Calu3 (cell line): ENCODE measurements at regions of chr9 and their contacts with region 1.

Region 1: GRCh38 chr9:113275157-113276131 is at the starts of genes CDC26 and PRPF4:
- DNase-seq: peak; percentile 93
- H3K4me3 Mint-ChIP-seq: no peak within 1 kb of the TSS
- H3K27ac Mint-ChIP-seq: no peak within 1 kb of the TSS
- H3K4me1 Mint-ChIP-seq: no peaks in the 10 kb centered on the region
- H3K27me3 Mint-ChIP-seq: no peaks in the 10 kb centered on the region
- CTCF ChIP-seq: no peak
- total RNA-seq, gene CDC26: 20.5 and 21.3 TPM in 2 replicates
- total RNA-seq, gene PRPF4: 23.7 TPM in 2 replicates

Region 2: GRCh38 chr9:112050544-112051475 is 1224.6 kb before region 1 on chr9:
- CTCF ChIA-PET with region 1: interaction called, 11 read pairs
- intact Hi-C with region 1: no loop called
- DNase-seq: no peak
- H3K4me3 Mint-ChIP-seq: no peak overlapping the region
- H3K27ac Mint-ChIP-seq: no peak overlapping the region
- H3K4me1 Mint-ChIP-seq: peaks cover 25% of the 10 kb centered on the region
- H3K27me3 Mint-ChIP-seq: no peaks in the 10 kb centered on the region
- CTCF ChIP-seq: no peak

Region 3: GRCh38 chr9:113164536-113165300 is 110.7 kb before region 1 on chr9:
- CTCF ChIA-PET with region 1: no interaction called
- intact Hi-C with region 1: no loop called
- DNase-seq: no peak
- H3K4me3 Mint-ChIP-seq: no peak overlapping the region
- H3K27ac Mint-ChIP-seq: no peak overlapping the region
- H3K4me1 Mint-ChIP-seq: no peaks in the 10 kb centered on the region
- H3K27me3 Mint-ChIP-seq: no peaks in the 10 kb centered on the region
- CTCF ChIP-seq: no peak

Region 4: DNA sequence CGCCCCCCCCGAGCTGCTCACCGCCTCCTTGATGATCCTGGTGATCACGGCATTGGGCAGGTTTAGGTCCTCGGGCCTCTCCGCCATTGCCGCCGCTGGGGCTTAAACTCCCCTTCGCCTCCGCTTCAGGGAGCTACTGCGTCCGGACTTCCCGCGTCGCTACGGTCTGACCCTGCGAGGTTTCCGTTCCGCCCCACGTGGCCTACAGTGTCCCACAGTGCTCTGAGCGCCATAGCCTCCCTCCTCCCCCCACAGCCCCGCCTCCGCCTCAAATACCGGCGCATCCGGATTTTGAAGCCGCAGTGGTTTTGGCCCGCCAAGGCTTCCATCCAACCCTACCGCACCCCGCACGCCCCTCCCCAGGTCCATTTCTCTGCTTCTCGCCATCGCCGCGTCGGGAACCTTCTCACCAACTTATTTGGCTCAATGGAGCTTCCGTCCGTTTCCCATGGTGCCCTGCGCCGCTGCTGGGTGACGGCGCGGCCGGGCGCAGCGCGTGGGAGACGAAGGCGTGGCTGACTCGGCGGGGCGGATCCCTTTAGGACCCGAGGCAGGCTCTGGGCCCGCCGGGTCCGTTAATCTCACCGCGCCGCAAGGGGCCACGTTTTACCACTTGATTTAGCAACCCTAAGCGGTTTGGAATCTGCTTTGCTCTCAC is 134.9 kb after region 1 on chr9 and contains the starts of genes C9orf43 and POLE3:
- CTCF ChIA-PET with region 1: no interaction called
- intact Hi-C with region 1: loop called (anchors 1 kb)
- DNase-seq: peak; percentile 89
- H3K4me3 Mint-ChIP-seq: peak within 1 kb of the TSS; percentile 95
- H3K27ac Mint-ChIP-seq: peak within 1 kb of the TSS; percentile 97
- H3K4me1 Mint-ChIP-seq: peaks cover 9% of the 10 kb centered on the region
- H3K27me3 Mint-ChIP-seq: no peaks in the 10 kb centered on the region
- CTCF ChIP-seq: no peak
- total RNA-seq, gene C9orf43: 0.33 and 0.51 TPM in 2 replicates
- total RNA-seq, gene POLE3: 37.7 and 41.0 TPM in 2 replicates

Region 5: DNA sequence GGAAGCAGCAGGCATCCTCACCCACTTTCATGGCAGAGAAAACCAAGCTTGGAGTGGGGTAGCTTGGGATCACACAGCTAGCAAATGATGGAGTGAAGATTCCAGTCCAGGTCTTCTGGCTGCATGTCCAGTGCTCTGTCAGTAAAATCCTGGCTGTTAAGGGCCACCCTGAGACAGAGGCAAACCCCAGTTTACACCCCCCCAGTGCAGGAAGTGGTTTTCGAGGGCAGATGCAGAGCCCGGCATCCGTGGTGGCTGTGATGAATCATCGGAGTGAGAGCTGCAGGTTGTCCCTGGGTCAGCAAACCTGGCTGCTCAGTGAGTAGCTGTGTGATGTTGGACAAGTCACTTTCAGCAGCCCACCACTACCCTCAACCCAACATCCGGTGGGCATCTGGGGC is 303.4 kb after region 1 on chr9:
- CTCF ChIA-PET with region 1: no interaction called
- intact Hi-C with region 1: loop called (anchors 10 kb)
- DNase-seq: peak; percentile 84
- H3K4me3 Mint-ChIP-seq: peak overlapping the region; percentile 64
- H3K27ac Mint-ChIP-seq: peak overlapping the region; percentile 89
- H3K4me1 Mint-ChIP-seq: peaks cover 54% of the 10 kb centered on the region
- H3K27me3 Mint-ChIP-seq: no peaks in the 10 kb centered on the region
- CTCF ChIP-seq: no peak